ENCODE measurements at regions of chr6 and their contacts with region 1.

Region 1: DNA sequence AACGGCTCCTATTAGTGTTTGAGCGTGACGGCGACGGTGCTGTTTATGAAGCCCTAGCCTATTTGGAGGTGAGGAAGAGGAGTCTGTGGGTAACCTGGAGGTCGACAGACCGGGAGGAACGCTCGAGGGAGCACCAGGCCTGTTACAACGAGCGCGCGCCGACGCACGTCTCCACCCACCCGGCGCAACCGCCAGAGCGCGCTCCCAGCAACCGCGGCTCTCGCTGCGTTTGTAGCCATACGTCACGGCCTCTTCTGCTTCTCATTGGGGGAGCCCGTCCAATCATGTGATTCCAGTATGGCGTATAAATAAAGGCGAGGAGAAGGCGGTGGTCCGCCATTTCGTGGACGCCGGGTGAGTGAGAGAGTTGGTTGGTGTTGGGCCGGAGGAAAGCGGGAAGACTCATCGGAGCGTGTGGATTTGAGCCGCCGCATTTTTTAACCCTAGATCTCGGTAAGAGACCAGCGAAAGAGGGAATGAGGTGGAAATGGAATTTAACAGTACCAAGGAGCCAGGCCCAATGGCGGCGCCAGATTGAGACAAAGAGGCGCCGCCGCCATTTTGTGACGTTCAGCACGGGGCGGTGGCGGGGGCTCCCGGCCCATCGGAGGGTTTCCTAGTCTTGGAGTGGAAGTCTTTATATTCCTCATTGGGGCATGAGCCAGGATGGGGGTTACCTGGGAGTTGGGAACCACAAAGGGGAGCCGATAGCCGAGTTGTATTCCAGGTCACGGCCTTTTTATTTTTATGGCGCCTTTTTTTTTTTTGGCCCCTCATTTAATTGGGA is at the start of gene SRSF3:
- DNase-seq: peak; percentile 99
- H3K4me3 ChIP-seq: peak within 1 kb of the TSS; percentile 97
- H3K27ac ChIP-seq: peak within 1 kb of the TSS; percentile 97
- H3K4me1 ChIP-seq: peaks cover 59% of the 10 kb centered on the region
- CTCF ChIP-seq: peak; percentile 50
- total RNA-seq, gene SRSF3: 316 and 557 TPM in 2 replicates

Region 2: GRCh38 chr6:36423101-36423824 is 171.0 kb before region 1 on chr6:
- CTCF ChIA-PET with region 1: no interaction called
- POLR2A ChIA-PET with region 1: no interaction called
- intact Hi-C with region 1: loop called (anchors 1 kb)
- DNase-seq: peak; percentile 99
- H3K4me3 ChIP-seq: peak overlapping the region; percentile 68
- H3K27ac ChIP-seq: peak overlapping the region; percentile 45
- H3K4me1 ChIP-seq: peaks cover 13% of the 10 kb centered on the region
- CTCF ChIP-seq: peak; percentile 85

Region 3: DNA sequence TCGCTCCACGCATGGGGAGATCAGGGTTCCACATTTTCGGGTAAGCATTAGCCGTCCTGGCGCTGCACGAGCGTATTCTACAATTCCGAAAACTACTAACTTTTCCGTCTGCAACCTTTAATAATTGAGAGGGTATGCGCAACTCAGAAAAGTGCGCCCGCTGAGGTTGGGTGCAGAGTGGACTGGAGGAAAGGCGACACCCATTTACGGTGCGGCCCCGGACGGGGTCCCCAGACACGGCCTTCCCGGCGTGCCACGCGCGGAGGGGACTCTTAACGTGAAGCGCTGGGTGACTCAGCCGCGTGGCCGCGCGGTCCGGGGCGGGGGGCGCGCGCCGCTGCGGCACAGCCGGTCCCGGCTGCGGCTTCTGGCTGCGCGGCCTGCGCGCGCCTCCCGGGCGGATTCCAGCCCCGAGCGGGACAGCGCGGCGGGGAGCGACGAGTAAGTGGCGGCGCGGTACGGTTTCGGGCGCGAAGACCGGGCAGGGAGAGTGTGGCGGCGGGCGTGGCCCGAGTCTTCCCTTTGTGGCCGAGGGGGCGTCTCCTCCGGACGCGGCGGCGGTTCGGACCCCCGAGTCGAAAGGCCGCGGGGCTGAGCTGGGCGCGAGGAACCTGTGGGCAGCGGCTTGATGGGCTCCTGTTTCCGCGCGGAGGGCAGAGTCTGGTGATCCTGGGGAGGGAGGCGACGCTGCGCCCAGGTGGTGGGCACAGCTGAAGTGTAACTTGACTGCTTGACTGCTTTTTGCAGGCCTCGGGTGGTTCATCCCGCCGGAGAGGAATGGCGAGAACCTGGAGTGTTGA is 151.4 kb before region 1 on chr6 and contains the starts of genes KCTD20 and PXT1:
- CTCF ChIA-PET with region 1: no interaction called
- POLR2A ChIA-PET with region 1: interaction called, 5 read pairs
- intact Hi-C with region 1: loop called (anchors 1 kb)
- DNase-seq: peak; percentile 95
- H3K4me3 ChIP-seq: peak within 1 kb of the TSS; percentile 96
- H3K27ac ChIP-seq: peak within 1 kb of the TSS; percentile 85
- H3K4me1 ChIP-seq: peaks cover 33% of the 10 kb centered on the region
- CTCF ChIP-seq: peak; percentile 37; the same call in 1 of the 2 replicates
- total RNA-seq, gene KCTD20: 73.6 and 74.8 TPM in 2 replicates
- total RNA-seq, gene PXT1: 0.15 TPM in 1 of 2 replicates, not detected in the other

Region 4: DNA sequence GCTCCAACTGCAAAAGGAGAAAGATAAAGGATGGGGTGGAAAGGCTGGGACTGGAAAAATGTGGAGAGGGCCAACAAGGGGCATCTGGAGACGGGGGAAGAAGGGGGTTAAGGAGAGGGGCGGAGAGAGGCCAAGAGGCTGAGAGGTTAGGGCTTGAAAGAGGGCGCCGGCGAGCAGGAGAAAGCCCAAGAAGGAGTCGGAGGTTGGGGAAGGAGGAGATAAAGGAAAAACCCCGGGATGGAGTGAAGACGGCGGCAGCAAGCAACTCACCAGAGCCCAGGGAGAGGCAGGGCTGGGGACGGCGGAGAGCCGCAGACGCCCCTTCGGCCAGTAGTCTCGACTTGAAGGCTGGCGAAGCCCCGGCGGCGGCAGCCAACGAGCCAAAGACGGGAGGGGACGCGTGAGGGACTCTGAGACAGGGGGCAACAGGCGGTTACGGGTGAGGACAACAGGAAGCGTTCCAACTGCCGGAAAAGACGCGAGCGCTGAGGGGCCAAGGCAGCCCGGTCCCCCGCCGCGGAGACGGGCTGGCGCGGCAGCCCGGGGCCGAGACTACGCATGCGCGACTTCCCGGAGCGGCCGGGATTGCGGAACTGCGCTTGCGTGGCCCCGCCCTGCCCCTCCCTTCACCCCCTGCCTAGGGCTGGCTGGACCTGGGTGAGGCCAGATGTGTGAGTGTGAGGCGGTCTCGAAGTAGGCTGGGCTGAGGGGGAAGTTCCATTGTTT is 47.1 kb before region 1 on chr6 and contains the start of gene STK38:
- CTCF ChIA-PET with region 1: no interaction called
- POLR2A ChIA-PET with region 1: interaction called, 9 read pairs
- intact Hi-C with region 1: loop called (anchors 1 kb)
- DNase-seq: peak; percentile 94
- H3K4me3 ChIP-seq: peak within 1 kb of the TSS; percentile 84
- H3K27ac ChIP-seq: peak within 1 kb of the TSS; percentile 78
- H3K4me1 ChIP-seq: peaks cover 66% of the 10 kb centered on the region
- CTCF ChIP-seq: peak; percentile 58; the same call in 1 of the 2 replicates
- total RNA-seq, gene STK38: 22.4 and 29.4 TPM in 2 replicates

Region 5: DNA sequence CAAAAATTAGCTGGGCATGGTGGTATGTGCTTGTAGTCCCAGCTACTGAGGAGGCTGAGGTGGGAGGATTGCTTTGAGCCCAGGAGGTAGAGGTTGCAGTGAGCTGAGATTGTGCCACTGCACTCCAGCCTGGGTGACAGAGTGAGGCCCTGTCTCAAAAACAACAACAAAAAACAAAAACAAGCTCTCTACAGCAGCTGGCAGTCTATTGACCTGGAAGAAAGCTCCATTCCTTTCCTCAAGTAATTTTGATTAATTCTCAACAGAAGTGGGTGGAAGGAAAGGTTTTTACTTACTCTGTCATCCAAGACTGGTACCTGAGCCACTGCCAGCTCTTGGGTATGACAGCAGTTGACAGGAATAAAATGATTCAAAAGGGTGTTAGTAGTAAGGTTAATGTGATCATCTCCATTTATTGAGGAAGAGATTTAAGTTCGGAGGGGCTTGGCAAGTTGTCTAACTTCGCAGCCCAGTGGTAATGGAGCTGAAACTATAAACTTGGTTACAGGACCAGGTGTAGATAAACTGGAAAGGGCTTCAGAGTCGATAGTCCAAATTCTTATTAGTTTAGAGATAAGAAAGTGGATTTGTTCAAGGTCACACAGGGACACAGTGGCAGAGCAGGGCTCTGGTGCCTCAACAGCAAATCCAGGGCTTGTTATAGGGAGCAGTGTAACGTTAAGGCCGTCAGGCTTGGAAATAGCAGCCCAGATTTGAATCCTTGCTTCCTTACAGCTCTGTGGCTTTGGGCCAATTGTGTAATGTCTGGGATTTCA is 14.8 kb after region 1 on chr6:
- CTCF ChIA-PET with region 1: no interaction called
- POLR2A ChIA-PET with region 1: interaction called, 15 read pairs
- intact Hi-C with region 1: no loop called
- DNase-seq: no peak
- H3K4me3 ChIP-seq: no peak overlapping the region
- H3K27ac ChIP-seq: no peak overlapping the region
- H3K4me1 ChIP-seq: no peaks in the 10 kb centered on the region
- CTCF ChIP-seq: no peak

Region 6: DNA sequence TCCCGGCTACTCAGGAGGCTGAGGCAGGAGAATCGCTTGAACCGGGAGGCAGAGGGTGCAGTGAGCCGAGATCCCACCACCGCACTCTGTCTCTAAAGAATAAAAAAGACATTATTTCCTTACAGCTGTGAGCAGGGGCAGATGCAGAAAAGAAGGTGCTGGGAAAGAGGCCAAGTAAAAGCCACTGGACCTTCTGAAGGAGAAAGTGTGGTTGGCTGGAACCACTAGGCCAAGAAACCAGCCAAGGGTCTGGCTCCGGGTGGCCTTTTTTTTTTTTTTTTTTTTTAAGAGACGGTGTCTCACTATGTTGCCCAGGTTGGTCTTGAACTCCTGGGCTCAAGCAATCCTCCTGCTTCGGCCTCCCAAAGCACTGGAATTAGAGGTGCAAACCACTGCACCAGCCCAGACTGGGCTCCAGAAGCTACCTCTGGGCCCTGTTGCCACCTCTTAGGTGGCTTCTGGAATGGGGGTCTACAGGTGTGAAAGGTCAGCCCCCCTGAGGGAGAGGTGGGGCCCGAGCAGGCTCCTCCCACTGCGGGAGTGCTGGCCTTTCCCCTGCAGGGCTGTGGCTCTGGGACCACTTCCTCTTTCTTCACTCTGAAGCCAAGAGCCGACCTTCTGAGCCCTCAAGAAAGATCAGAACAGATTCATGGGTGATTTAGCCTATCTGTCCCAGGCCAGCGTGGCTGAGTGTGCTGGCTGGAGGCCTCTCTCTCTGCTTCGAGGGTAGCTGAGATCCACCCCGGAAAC is 411.0 kb after region 1 on chr6 and contains the start of gene FGD2:
- CTCF ChIA-PET with region 1: no interaction called
- POLR2A ChIA-PET with region 1: no interaction called
- intact Hi-C with region 1: loop called (anchors 10 kb)
- DNase-seq: peak; percentile 90
- H3K4me3 ChIP-seq: peak within 1 kb of the TSS; percentile 70
- H3K27ac ChIP-seq: peak within 1 kb of the TSS; percentile 70
- H3K4me1 ChIP-seq: peaks cover 65% of the 10 kb centered on the region
- CTCF ChIP-seq: no peak
- total RNA-seq, gene FGD2: 23.8 and 27.8 TPM in 2 replicates

Region 7: DNA sequence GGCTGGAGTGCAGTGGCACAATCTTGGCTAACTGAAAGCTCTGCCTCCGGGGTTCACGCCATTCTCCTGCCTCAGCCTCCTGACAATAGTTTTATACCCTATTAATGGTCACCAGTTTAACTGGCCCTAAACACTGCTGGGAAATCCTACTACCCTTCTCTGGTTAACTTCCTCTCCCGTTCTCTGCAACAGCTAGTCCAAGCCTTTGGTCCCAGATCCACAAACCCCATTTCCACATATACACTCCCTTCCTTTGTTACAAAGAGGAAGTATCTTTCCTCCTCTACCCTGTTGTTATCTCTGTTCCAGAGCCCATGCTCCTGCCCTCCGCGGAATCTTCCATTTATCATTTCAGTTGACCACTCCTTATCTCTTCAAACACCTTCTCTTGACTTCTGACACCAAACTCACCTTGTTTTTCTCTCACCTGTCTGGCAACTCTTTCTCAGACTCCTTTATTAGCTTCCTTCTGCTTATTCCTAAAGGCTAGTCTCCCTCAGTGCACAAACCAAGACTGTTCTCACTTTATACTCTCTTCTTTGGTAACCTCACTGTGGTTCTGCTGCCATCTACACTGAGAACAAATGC is 638.3 kb after region 1 on chr6:
- CTCF ChIA-PET with region 1: no interaction called
- POLR2A ChIA-PET with region 1: no interaction called
- intact Hi-C with region 1: no loop called
- DNase-seq: no peak
- H3K4me3 ChIP-seq: no peak overlapping the region
- H3K27ac ChIP-seq: no peak overlapping the region
- H3K4me1 ChIP-seq: no peaks in the 10 kb centered on the region
- CTCF ChIP-seq: no peak